ENCODE measurements at regions of chr17 and their contacts with region 1.

Region 1: DNA sequence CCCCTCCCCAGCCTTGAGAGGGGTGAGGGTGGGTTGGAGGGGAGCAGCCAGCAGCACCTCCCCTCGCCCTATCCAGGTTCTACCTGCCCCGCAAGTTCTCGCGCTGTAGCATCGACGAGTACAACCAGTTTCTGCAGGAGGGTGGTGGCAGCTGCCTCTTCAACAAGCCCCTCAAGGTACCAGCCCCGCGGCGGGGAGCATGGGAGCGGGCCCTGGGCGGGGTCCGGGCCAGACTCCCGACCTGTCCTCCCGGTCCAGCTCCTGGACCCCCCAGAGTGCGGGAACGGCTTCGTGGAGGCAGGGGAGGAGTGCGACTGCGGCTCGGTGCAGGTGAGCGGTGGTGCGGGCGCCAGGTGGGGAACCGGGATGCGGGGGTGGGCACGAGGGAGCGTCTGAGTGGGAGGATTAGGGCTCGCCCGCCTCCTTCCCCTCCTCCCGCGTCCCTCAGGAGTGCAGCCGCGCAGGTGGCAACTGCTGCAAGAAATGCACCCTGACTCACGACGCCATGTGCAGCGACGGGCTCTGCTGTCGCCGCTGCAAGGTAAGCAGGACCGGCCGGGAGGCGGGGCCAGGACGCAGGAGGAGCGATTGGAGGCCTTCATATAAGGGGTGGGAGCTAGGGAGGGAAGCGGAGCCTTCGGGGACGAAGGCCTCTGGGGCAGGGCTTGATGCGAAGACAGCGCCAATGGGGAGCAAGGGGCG is 16.5 kb downstream of the ADAM11 start:
- DNase-seq: peak; percentile 99
- CTCF ChIP-seq: no peak

Region 2: GRCh38 chr17:44645341-44645740 is 129.9 kb before region 1 on chr17:
- CTCF ChIA-PET with region 1: no interaction called
- POLR2A ChIA-PET with region 1: no interaction called
- DNase-seq: no peak
- CTCF ChIP-seq: no peak

Region 3: DNA sequence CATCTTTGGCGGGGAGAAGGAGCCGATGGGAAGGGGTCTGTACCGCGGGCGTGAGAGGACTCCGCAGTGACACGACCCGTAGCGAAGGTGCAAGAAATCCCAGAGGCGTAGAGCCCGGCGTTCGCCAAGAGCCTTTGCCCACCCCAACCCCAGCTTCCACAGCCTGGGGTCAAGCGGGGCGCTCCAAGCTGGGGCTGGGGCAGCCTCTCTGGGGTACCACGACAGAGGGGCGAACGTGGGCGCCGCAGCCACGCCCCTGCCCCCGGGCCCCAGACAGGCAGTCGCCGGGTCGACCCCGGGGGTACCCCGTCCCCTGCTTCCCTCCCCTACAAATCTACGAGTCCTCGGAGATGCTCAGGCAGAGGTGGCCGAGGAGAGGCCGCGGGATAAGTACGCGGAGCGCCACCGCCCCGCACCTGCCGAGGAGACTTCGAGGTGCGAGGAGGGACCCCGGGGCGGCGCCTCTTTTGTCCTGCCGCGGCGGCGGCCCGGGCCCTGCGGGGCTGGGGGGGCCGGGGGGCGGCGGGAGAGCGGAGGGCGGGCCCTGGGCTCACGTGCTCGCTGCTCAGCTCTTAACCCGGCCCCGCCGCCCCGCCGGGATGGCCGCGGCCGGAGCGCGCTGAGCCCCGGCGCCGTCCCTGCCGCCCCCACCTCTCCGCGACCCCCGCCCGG is 16.7 kb before region 1 on chr17 and contains the start of gene ADAM11:
- CTCF ChIA-PET with region 1: interaction called, 31 read pairs
- POLR2A ChIA-PET with region 1: no interaction called
- DNase-seq: peak; percentile 54
- CTCF ChIP-seq: no peak

Region 4: DNA sequence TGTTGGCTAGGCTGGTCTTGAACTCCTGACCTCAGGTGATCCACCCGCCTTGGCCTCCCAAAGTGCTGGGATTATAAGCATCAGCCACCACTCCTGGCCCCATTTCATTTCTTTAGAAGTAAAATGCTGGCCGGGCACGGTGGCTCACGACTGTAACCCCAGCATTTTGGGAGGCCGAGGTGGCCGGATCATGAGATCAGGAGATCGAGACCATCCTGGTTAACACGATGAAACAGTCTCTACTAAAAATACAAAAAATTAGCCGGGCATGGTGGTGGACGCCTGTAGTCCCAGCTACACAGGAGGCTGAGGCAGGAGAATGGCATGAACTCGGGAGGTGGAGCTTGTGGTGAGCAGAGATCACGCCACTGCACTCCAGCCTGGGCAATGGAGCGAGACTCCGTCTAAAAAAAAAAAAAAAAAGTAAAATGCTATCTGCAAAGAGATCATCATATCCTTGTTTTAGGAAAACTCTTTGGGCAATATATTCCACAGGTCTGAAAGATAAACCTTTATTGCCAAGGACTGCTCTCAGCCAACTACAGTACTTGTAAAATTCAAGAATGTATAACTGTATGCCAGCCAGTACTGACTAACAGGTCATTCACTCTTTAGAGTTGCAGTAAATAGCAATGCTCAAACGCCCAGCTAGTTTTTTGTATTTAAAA is 51.0 kb after region 1 on chr17:
- CTCF ChIA-PET with region 1: interaction called, 13 read pairs
- POLR2A ChIA-PET with region 1: no interaction called
- DNase-seq: no peak
- CTCF ChIP-seq: no peak

Region 5: GRCh38 chr17:44864866-44865660 is 89.8 kb after region 1 on chr17:
- CTCF ChIA-PET with region 1: interaction called, 454 read pairs
- POLR2A ChIA-PET with region 1: no interaction called
- DNase-seq: peak; percentile 80
- CTCF ChIP-seq: peak; percentile 77

Region 6: GRCh38 chr17:44899069-44899782 is 123.9 kb after region 1 on chr17 and contains the start of gene EFTUD2:
- CTCF ChIA-PET with region 1: interaction called, 10 read pairs
- POLR2A ChIA-PET with region 1: no interaction called
- DNase-seq: peak; percentile 95
- CTCF ChIP-seq: no peak

Region 7: GRCh38 chr17:45021607-45022287 is 246.5 kb after region 1 on chr17:
- CTCF ChIA-PET with region 1: interaction called, 28 read pairs
- POLR2A ChIA-PET with region 1: no interaction called
- DNase-seq: peak; percentile 91
- CTCF ChIP-seq: peak; percentile 79